ENCODE measurements at regions of chr5 and their contacts with region 1.

Region 1: DNA sequence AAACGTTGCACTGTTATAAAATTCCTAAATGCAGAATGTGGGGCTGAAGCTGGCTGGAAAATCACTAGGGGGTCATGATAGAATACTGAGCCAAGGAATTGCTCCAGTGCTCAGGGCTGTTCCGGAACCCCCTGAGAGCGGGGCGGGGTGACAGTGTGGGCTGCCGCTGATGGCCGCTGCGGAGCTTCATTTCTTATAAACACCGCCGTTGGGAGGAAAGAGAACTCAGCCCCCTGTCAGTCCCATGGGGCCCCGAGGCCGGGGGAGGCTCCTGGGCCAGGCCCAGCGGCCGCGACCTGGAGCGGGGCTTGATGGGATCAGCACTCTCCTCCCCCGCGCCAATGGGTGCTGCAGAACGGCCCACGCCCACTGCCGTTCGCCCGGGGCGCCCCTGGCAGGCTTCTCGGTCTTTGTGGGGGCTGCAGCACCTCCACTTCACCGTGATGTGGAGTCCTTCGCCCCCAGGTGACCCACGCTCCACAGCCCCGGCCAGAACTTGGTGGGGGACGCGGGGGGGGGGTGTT is 5.2 kb upstream of the IRF1 start:
- DNase-seq: peak; percentile 72
- ATAC-seq: peak; percentile 39
- H3K4me3 ChIP-seq: peak overlapping the region; percentile 85
- H3K27ac ChIP-seq: peak overlapping the region; percentile 84
- H3K4me1 ChIP-seq: peaks cover 51% of the 10 kb centered on the region
- H3K27me3 ChIP-seq: no peaks in the 10 kb centered on the region
- CTCF ChIP-seq: no peak

Region 2: DNA sequence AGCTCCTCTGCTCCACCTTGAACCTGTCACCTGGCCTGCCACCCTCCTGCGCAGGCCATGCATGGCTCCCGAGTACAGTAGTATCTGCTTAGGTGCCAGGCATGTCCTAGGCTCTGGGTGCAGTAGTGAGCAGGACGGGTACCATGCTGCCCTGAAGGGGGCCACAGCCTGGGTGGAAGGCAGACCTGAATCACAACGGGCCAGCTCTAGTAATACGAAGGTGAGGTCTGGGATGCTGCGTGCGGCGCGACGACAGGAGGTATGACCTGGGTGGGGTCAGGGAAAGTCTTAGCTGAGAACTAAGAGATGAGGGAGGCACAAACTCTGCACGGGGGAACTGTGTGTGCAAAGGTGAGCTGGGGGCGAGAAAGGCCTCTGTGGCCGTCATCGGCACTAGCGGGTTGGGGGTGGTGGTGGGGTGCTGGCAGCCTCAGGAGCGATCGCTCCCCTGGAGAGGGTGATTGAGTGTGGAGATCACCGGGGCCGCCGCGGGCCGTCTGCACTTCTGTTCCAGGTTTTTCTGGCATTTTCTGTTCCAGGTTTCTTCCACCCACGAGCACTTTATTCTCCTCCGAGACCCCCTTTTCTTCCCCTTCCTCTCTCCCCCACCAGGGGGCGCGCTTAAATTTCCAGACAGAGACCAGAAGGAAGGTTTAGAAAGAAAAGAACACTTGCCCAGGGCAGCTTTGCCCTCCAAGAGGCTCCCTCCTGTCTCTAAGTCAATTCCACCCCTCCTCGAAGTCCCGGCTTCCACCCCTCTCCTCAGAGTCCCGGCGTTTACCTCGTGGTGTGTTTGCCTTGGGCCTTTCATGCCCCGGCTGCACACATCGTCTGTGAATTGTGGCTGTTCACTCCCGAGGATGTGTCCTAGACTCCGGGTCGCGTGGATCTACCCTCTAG is 223.2 kb before region 1 on chr5:
- CTCF ChIA-PET with region 1: no interaction called
- POLR2A ChIA-PET with region 1: no interaction called
- intact Hi-C with region 1: no loop called
- DNase-seq: peak; percentile 56
- ATAC-seq: peak; percentile 42
- H3K4me3 ChIP-seq: no peak overlapping the region
- H3K27ac ChIP-seq: no peak overlapping the region
- H3K4me1 ChIP-seq: no peaks in the 10 kb centered on the region
- H3K27me3 ChIP-seq: no peaks in the 10 kb centered on the region
- CTCF ChIP-seq: peak; percentile 72

Region 3: GRCh38 chr5:132369474-132370180 is 126.1 kb before region 1 on chr5 and contains the start of gene SLC22A5:
- CTCF ChIA-PET with region 1: no interaction called
- POLR2A ChIA-PET with region 1: interaction called, 10 read pairs
- intact Hi-C with region 1: no loop called
- DNase-seq: peak; percentile 76
- ATAC-seq: peak; percentile 85
- H3K4me3 ChIP-seq: peak within 1 kb of the TSS; percentile 97
- H3K27ac ChIP-seq: peak within 1 kb of the TSS; percentile 51
- H3K4me1 ChIP-seq: peaks cover 42% of the 10 kb centered on the region
- H3K27me3 ChIP-seq: no peaks in the 10 kb centered on the region
- CTCF ChIP-seq: no peak
- total RNA-seq, gene SLC22A5: 8.2 and 21.8 TPM in 2 replicates

Region 4: DNA sequence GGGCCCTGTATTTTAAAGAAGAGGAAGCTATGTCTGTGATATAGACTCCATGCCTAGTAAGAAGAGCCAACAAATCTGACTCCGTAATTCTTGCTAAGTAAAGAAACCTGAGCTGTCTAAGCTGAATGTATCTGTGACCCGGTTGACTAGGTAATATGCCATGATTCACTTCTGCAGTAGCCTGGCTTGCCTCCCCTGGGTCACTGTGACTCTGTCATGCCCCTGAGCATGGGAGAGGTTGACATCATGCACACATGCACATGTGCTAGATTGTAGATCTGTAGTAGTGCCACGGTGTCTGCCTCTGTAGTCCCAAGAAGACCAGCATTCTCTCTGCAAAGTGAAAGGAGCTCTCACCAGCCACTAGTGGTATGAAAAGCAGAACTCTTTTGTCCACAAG is 117.1 kb before region 1 on chr5:
- CTCF ChIA-PET with region 1: no interaction called
- POLR2A ChIA-PET with region 1: no interaction called
- intact Hi-C with region 1: loop called (anchors 2 kb)
- DNase-seq: peak; percentile 84
- ATAC-seq: peak; percentile 100
- H3K4me3 ChIP-seq: no peak overlapping the region
- H3K27ac ChIP-seq: peak overlapping the region; percentile 88
- H3K4me1 ChIP-seq: peaks cover 21% of the 10 kb centered on the region
- H3K27me3 ChIP-seq: no peaks in the 10 kb centered on the region
- CTCF ChIP-seq: no peak

Region 5: GRCh38 chr5:132410451-132411381 is 85.0 kb before region 1 on chr5:
- CTCF ChIA-PET with region 1: interaction called, 5 read pairs
- POLR2A ChIA-PET with region 1: interaction called, 18 read pairs
- intact Hi-C with region 1: loop called (anchors 2 kb)
- DNase-seq: peak; percentile 64
- ATAC-seq: peak; percentile 63
- H3K4me3 ChIP-seq: peak overlapping the region; percentile 71
- H3K27ac ChIP-seq: peak overlapping the region; percentile 90
- H3K4me1 ChIP-seq: peaks cover 65% of the 10 kb centered on the region
- H3K27me3 ChIP-seq: no peaks in the 10 kb centered on the region
- CTCF ChIP-seq: peak; percentile 51; the same call in 1 of the 2 replicates

Measured in PC-3 (cell line).